Activated CD4-positive, alpha-beta T cell treated with anti-CD3 and anti-CD28 coated beads for 36 hours (primary cell): ENCODE measurements at regions of chr6 and their contacts with region 1.

Region 1: GRCh38 chr6:36759148-36759759 is 61.6 kb downstream of the RAB44 start:
- DNase-seq: peak; percentile 91
- ATAC-seq: peak; percentile 33
- H3K4me3 Mint-ChIP-seq: no peak overlapping the region
- H3K27ac Mint-ChIP-seq: no peak overlapping the region
- H3K4me1 Mint-ChIP-seq: peaks cover 43% of the 10 kb centered on the region
- H3K27me3 Mint-ChIP-seq: peaks cover 3% of the 10 kb centered on the region

Region 2: DNA sequence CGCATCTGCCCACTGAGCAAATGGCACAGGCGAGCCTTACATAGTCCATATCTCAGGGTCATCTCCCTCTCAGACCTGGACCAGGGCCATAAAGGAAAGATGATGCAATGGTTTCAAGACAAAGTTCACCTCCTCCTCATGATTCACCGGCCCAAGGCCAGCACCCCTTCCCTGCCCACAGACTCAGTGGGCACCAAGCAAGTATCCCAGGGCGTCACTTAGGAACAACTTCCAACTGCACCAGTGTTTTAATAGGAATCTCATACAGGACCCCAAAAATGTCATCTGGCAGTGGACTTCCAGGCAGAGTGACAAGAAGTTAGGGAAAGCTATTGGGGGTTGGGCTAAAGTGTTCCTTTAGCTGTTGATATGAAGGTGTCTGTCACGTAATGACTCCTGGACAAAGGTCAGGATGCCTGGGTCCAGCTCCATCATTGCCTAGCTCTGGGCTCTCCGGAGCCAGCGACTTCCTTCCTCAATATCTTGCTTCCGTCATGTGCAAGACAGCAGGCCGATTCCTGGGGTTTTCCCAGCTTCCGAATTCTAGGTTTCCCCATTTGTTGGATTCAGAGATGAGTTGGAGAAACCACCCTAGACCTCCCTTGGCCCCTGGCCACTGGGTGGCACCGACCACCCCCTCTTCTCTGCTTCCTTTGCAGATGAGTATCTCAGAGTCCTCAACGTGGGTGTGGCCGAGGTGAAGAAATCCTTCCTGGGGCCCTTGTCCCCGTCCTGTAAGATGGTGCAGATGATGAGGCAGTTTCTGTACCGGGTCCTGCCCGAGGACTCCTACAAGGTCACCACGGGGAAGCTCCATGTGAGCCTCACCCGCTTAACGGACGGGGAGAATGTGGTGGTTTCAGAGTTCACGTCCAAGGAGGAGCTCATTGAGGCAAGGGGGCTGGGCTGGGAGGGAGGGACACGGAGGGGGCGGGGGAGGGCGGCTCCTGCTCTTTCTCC is 468.3 kb before region 1 on chr6:
- CTCF ChIA-PET with region 1: no interaction called
- POLR2A ChIA-PET with region 1: no interaction called
- intact Hi-C with region 1: no loop called
- DNase-seq: no peak
- ATAC-seq: no peak
- H3K4me3 Mint-ChIP-seq: no peak overlapping the region
- H3K27ac Mint-ChIP-seq: no peak overlapping the region
- H3K4me1 Mint-ChIP-seq: peaks cover 7% of the 10 kb centered on the region
- H3K27me3 Mint-ChIP-seq: peaks cover 1% of the 10 kb centered on the region

Region 3: GRCh38 chr6:36442671-36443470 is 316.4 kb before region 1 on chr6 and contains the starts of genes KCTD20 and PXT1:
- CTCF ChIA-PET with region 1: no interaction called
- POLR2A ChIA-PET with region 1: no interaction called
- intact Hi-C with region 1: loop called in 1 of 2 experiments (anchors 5 kb)
- DNase-seq: peak; percentile 94
- ATAC-seq: peak; percentile 78
- H3K4me3 Mint-ChIP-seq: peak within 1 kb of the TSS; percentile 95
- H3K27ac Mint-ChIP-seq: peak within 1 kb of the TSS; percentile 97
- H3K4me1 Mint-ChIP-seq: peaks cover 27% of the 10 kb centered on the region
- H3K27me3 Mint-ChIP-seq: no peaks in the 10 kb centered on the region
- total RNA-seq, gene KCTD20: 46.5 to 50.6 TPM
- total RNA-seq, gene PXT1: 0.11 to 0.14 TPM

Region 4: GRCh38 chr6:36615018-36615761 is 144.1 kb before region 1 on chr6:
- CTCF ChIA-PET with region 1: interaction called, 60 read pairs
- POLR2A ChIA-PET with region 1: interaction called, 4 read pairs
- intact Hi-C with region 1: loop called (anchors 1 to 2 kb)
- DNase-seq: peak; percentile 71
- ATAC-seq: peak; percentile 67
- H3K4me3 Mint-ChIP-seq: no peak overlapping the region
- H3K27ac Mint-ChIP-seq: peak overlapping the region; percentile 24
- H3K4me1 Mint-ChIP-seq: peaks cover 13% of the 10 kb centered on the region
- H3K27me3 Mint-ChIP-seq: no peaks in the 10 kb centered on the region

Region 5: GRCh38 chr6:36694616-36695015 is 64.6 kb before region 1 on chr6:
- CTCF ChIA-PET with region 1: interaction called, 5 read pairs
- POLR2A ChIA-PET with region 1: no interaction called
- intact Hi-C with region 1: loop called (anchors 1 kb)
- DNase-seq: no peak
- ATAC-seq: no peak
- H3K4me3 Mint-ChIP-seq: no peak overlapping the region
- H3K27ac Mint-ChIP-seq: peak overlapping the region; percentile 67
- H3K4me1 Mint-ChIP-seq: peaks cover 41% of the 10 kb centered on the region
- H3K27me3 Mint-ChIP-seq: no peaks in the 10 kb centered on the region

Region 6: GRCh38 chr6:36724514-36725390 is 34.5 kb before region 1 on chr6:
- CTCF ChIA-PET with region 1: interaction called, 3 read pairs
- POLR2A ChIA-PET with region 1: no interaction called
- intact Hi-C with region 1: loop called in 1 of 2 experiments (anchors 2 kb)
- DNase-seq: peak; percentile 82
- ATAC-seq: peak; percentile 45
- H3K4me3 Mint-ChIP-seq: no peak overlapping the region
- H3K27ac Mint-ChIP-seq: no peak overlapping the region
- H3K4me1 Mint-ChIP-seq: peaks cover 25% of the 10 kb centered on the region
- H3K27me3 Mint-ChIP-seq: no peaks in the 10 kb centered on the region

Region 7: GRCh38 chr6:36780442-36781177 is 21.4 kb after region 1 on chr6:
- CTCF ChIA-PET with region 1: interaction called, 152 read pairs
- POLR2A ChIA-PET with region 1: no interaction called
- intact Hi-C with region 1: no loop called
- DNase-seq: no peak
- ATAC-seq: no peak
- H3K4me3 Mint-ChIP-seq: no peak overlapping the region
- H3K27ac Mint-ChIP-seq: no peak overlapping the region
- H3K4me1 Mint-ChIP-seq: no peaks in the 10 kb centered on the region
- H3K27me3 Mint-ChIP-seq: no peaks in the 10 kb centered on the region